ENCODE measurements at regions of chr4 and their contacts with region 1.

Region 1: GRCh38 chr4:109998867-109999584 is 86.3 kb downstream of the EGF start:
- DNase-seq: no peak
- H3K4me3 ChIP-seq: no peak overlapping the region
- H3K27ac ChIP-seq: no peak overlapping the region
- H3K4me1 ChIP-seq: no peaks in the 10 kb centered on the region
- H3K27me3 ChIP-seq: no peaks in the 10 kb centered on the region
- CTCF ChIP-seq: peak; percentile 39 to 55 (median 52)
- POLR2A ChIP-seq: no peak

Region 2: GRCh38 chr4:109690690-109691410 is 308.2 kb before region 1 on chr4:
- intact Hi-C with region 1: no loop called
- DNase-seq: no peak
- H3K4me3 ChIP-seq: no peak overlapping the region
- H3K27ac ChIP-seq: no peak overlapping the region
- H3K4me1 ChIP-seq: no peaks in the 10 kb centered on the region
- H3K27me3 ChIP-seq: no peaks in the 10 kb centered on the region
- CTCF ChIP-seq: no peak
- POLR2A ChIP-seq: no peak

Region 3: DNA sequence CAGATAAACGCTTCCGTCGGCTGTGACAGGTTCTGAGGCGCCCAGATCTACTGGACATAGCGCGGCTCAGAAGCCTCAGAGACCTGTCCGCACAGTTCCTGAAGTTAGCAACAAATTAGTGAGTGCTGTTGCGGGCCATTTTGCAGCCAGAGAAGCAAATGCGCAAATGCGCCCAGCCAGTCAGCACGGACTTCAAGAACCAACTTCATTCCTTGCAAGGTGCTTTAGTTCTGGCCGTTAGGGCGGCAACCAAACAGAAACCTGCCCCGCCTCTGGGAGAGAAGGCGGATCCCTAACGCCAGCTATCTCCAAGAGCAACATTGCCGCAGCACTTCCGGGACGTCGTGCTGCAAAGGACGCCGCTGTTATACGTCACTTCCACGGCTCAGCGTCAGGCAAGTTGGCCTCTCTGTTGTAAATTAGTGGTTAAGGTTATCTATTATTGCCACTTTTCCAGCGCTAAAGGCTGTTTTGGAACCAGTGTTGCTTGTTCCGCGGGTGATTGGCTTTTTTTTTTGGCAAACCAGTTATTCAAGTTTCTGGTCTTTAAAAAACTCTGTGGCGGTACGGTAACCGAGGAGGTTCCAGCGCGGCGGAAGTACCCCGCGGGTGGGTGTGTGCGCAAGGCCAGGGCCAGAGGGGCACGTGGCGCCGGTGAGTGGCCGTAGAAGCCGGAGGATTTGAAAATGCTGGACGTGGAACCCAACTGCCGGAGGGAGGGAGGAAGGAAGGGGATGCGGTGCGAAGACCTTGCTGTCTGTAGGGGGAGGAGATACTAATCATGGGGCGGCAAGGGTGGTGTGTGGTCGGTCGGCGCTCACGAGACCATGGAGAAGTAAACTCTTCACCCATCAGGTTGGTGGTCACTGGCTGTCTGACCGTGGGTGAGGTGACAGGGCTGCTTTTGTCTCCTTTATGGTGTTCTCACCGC is 183.6 kb before region 1 on chr4 and contains the start of gene GAR1:
- intact Hi-C with region 1: no loop called
- DNase-seq: peak; percentile 97
- H3K4me3 ChIP-seq: peak within 1 kb of the TSS; percentile 84 to 87
- H3K27ac ChIP-seq: peak within 1 kb of the TSS; percentile 89 to 92
- H3K4me1 ChIP-seq: peaks cover 8% of the 10 kb centered on the region
- H3K27me3 ChIP-seq: no peaks in the 10 kb centered on the region
- CTCF ChIP-seq: no peak
- POLR2A ChIP-seq: no peak
- total RNA-seq, gene GAR1: 14.5 to 17.8 TPM

Region 4: GRCh38 chr4:110510955-110511544 is 512.0 kb after region 1 on chr4:
- intact Hi-C with region 1: loop called (anchors 5 kb)
- DNase-seq: no peak
- H3K4me3 ChIP-seq: no peak overlapping the region
- H3K27ac ChIP-seq: no peak overlapping the region
- H3K4me1 ChIP-seq: no peaks in the 10 kb centered on the region
- H3K27me3 ChIP-seq: no peaks in the 10 kb centered on the region
- CTCF ChIP-seq: peak; percentile 57 to 76 (median 65)
- POLR2A ChIP-seq: no peak